Naive thymus-derived CD4-positive, alpha-beta T cell (primary cell): ENCODE measurements at regions of chr1 and their contacts with region 1.

Region 1: GRCh38 chr1:67120855-67121619 is 13.7 kb downstream of the C1orf141 start:
- DNase-seq: no peak
- ATAC-seq: no peak
- H3K4me3 ChIP-seq: no peak overlapping the region
- H3K4me3 Mint-ChIP-seq: no peak overlapping the region
- H3K27ac ChIP-seq: no peak overlapping the region
- H3K27ac Mint-ChIP-seq: no peak overlapping the region
- H3K4me1 ChIP-seq: peaks cover 0 to 10% of the 10 kb centered on the region in 2 donors
- H3K4me1 Mint-ChIP-seq: peaks cover 0 to 36% (median 19%) of the 10 kb centered on the region in 7 donors
- H3K27me3 ChIP-seq: no peaks in the 10 kb centered on the region
- H3K27me3 Mint-ChIP-seq: no peaks in the 10 kb centered on the region

Region 2: GRCh38 chr1:66618390-66618789 is 502.6 kb before region 1 on chr1:
- CTCF ChIA-PET with region 1: no interaction called
- POLR2A ChIA-PET with region 1: no interaction called
- intact Hi-C with region 1: no loop called
- DNase-seq: no peak
- ATAC-seq: no peak
- H3K4me3 ChIP-seq: no peak overlapping the region
- H3K4me3 Mint-ChIP-seq: no peak overlapping the region
- H3K27ac ChIP-seq: no peak overlapping the region
- H3K27ac Mint-ChIP-seq: no peak overlapping the region
- H3K4me1 ChIP-seq: no peaks in the 10 kb centered on the region
- H3K4me1 Mint-ChIP-seq: no peaks in the 10 kb centered on the region
- H3K27me3 ChIP-seq: no peaks in the 10 kb centered on the region
- H3K27me3 Mint-ChIP-seq: peaks cover 0 to 13% (median 0%) of the 10 kb centered on the region in 5 donors

Region 3: GRCh38 chr1:66633159-66633558 is 487.9 kb before region 1 on chr1:
- CTCF ChIA-PET with region 1: no interaction called
- POLR2A ChIA-PET with region 1: no interaction called
- intact Hi-C with region 1: no loop called
- DNase-seq: no peak
- ATAC-seq: no peak
- H3K4me3 ChIP-seq: no peak overlapping the region
- H3K4me3 Mint-ChIP-seq: no peak overlapping the region
- H3K27ac ChIP-seq: no peak overlapping the region
- H3K27ac Mint-ChIP-seq: no peak overlapping the region
- H3K4me1 ChIP-seq: no peaks in the 10 kb centered on the region
- H3K4me1 Mint-ChIP-seq: no peaks in the 10 kb centered on the region
- H3K27me3 ChIP-seq: no peaks in the 10 kb centered on the region
- H3K27me3 Mint-ChIP-seq: peaks cover 0 to 15% (median 5%) of the 10 kb centered on the region in 5 donors

Region 4: GRCh38 chr1:67142931-67143330 is 21.9 kb after region 1 on chr1:
- CTCF ChIA-PET with region 1: no interaction called
- POLR2A ChIA-PET with region 1: no interaction called
- intact Hi-C with region 1: loop called in 1 of 2 experiments (anchors 2 kb)
- DNase-seq: peak in 7 of 9 donors; percentile 18 to 77 (median 66)
- ATAC-seq: peak; percentile 80
- H3K4me3 ChIP-seq: no peak overlapping the region
- H3K4me3 Mint-ChIP-seq: peak overlapping the region; percentile 9 to 81 (median 52)
- H3K27ac ChIP-seq: peak overlapping the region; percentile 38
- H3K27ac Mint-ChIP-seq: peak overlapping the region; percentile 3 to 95 (median 86)
- H3K4me1 ChIP-seq: peaks cover 10 to 16% of the 10 kb centered on the region in 2 donors
- H3K4me1 Mint-ChIP-seq: peaks cover 23 to 55% (median 44%) of the 10 kb centered on the region in 7 donors
- H3K27me3 ChIP-seq: no peaks in the 10 kb centered on the region
- H3K27me3 Mint-ChIP-seq: peaks cover 0 to 5% (median 0%) of the 10 kb centered on the region in 5 donors